Activated CD4-positive, alpha-beta memory T cell treated with anti-CD3 and anti-CD28 coated beads, Interleukin-2, amount 10 ng/mL, durations not matched to agents 7 days and 5 days (primary cell): ENCODE measurements at regions of chr1 and their contacts with region 1.

Region 1: GRCh38 chr1:94039514-94039870 is 81.5 kb downstream of the ABCA4 start:
- DNase-seq: peak; percentile 64
- H3K4me3 Mint-ChIP-seq: no peak overlapping the region
- H3K27ac Mint-ChIP-seq: no peak overlapping the region
- H3K4me1 Mint-ChIP-seq: peaks cover 15% of the 10 kb centered on the region
- H3K27me3 Mint-ChIP-seq: peaks cover 41% of the 10 kb centered on the region

Region 2: DNA sequence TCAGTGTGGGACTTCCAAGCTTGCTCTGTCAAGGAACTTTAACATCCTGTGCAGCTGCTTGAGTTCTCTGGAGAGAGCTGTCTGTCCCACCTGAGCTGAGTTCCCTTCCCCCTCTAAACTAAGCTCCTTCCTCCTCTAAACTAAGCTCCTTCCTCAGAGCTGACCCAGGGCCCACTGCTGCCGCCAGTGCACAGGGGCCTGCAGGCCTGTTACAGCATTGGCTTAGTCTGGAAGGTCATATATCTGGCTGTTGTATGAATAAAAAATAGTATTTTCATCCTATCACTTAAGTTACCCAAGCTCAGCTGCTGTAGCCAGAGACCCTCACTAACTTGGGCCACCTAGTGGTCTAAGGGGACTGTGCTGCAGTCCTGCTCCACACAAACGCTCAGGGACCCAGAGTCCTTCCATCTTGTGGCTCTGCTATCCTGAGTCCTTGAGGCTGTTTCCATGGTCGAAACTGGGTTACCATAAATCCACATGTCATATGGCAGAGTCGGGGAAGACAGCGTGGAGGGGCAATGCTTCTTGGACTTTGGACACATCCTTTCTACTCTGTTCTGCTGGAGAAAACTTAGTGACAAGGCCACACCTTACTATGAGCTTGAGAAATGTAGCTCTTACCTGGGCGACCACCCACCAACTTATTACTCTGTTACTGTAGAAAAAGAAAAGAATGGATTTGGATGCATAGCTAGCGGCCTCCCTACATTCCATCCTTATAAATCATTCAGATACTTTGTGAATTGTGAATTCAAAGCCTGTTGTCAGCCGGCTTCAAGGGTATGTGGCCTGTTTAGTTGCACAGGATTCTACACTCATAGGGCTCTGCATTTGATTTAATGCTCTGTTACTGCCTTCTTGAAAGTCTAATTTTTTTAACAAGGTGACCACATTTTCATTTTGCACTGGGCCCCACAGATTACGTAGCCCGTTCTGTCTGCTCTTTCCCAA is 58.9 kb before region 1 on chr1:
- CTCF ChIA-PET with region 1: interaction called, 10 read pairs
- POLR2A ChIA-PET with region 1: no interaction called
- DNase-seq: no peak
- H3K4me3 Mint-ChIP-seq: no peak overlapping the region
- H3K27ac Mint-ChIP-seq: no peak overlapping the region
- H3K4me1 Mint-ChIP-seq: no peaks in the 10 kb centered on the region
- H3K27me3 Mint-ChIP-seq: peaks cover 8% of the 10 kb centered on the region

Region 3: DNA sequence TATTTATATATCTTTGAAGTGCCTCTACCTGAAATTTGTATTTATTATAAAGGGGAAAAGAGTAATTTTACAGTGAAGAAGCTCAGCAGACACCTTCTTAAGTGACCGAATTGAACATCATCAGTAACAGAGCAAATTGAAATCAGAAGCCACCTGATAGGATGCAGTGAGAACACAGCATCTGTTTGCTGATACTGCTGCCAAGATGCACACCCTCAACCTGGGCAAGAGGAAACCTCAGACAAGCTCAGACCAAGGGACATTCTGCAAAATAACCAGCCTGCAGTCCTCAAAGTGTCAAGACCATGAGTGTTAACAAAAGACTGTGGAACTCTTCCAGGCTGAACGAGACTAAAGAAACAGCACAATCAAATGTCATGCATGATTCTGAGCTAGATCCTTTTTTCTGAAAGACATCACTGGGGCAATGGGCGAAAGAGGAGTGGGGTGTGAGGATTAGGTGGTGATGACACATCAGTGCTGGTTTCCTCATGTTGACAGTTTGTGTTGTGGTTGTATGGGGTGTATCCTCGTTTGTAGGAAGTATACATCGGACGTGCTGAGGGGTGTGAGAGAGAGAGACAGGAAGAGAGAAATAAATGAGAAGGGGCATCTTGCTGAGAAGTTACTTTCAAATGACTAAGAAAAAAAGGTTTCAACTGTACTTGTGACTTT is 22.2 kb before region 1 on chr1:
- CTCF ChIA-PET with region 1: interaction called, 95 read pairs
- POLR2A ChIA-PET with region 1: interaction called, 3 read pairs
- DNase-seq: peak; percentile 73
- H3K4me3 Mint-ChIP-seq: peak overlapping the region; percentile 4
- H3K27ac Mint-ChIP-seq: peak overlapping the region; percentile 86
- H3K4me1 Mint-ChIP-seq: peaks cover 44% of the 10 kb centered on the region
- H3K27me3 Mint-ChIP-seq: peaks cover 15% of the 10 kb centered on the region

Region 4: DNA sequence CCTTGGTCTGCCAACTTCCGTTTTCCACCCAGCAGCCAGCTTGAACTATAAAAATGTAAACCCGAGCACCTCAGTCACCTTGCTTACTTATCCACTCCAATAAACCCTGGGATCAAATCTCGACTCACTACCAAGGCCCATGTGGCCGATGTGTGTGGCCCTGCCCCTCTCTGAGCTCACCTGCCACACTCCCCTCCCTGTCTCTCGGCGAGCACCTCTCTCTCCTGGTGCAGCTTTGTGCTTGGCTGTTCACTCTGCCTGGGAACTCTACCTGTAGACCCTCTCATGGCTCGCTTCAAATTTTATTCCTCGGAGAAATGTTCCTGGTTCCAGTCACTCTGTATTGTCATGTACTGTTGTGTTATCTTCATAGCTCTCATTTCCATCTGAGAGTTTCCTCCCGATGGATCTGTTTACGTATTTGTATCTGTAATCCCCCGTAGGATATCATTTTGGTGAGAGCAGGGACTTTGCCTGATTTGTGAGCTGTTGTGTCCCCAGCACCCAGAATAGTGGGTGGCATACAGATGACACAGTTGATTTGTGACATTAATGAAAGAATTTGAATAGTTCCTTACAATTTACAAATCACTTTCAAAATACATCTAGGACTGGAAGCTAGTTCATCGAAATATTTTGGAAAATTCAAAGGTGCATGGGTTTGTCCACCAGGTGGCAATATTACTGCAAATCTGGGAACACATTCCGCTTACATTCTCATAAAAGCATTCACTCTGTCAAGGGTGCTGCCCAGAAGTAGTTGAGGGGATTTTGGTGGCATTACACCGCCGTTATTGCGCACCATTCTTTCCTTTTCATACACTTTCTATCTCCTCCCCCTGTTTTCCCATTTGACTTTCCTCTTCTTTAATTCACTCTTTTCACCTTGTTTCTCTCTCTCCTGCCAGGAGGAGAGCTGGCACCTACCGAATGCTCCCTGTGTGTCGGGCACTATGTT is 13.8 kb before region 1 on chr1:
- CTCF ChIA-PET with region 1: interaction called, 95 read pairs
- POLR2A ChIA-PET with region 1: interaction called, 3 read pairs
- DNase-seq: no peak
- H3K4me3 Mint-ChIP-seq: no peak overlapping the region
- H3K27ac Mint-ChIP-seq: no peak overlapping the region
- H3K4me1 Mint-ChIP-seq: peaks cover 15% of the 10 kb centered on the region
- H3K27me3 Mint-ChIP-seq: peaks cover 30% of the 10 kb centered on the region

Region 5: DNA sequence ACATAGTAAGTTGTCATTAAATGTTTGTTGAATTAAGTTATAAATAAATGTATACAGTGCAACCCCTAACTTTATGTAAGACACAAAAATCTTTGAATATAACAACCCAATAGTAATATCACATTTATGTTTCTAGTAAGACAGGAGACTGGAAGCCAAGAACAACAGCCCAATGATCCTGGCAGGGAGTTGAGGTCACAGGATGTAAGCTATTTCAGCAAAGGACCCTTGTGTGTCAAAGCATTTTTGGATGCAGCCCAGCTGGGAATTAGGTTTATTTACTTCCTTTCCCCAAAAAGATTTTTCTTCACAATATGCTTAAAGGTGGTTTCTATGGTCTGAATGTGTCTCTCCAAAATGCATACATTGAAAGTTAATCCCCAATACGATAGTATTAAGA is 115.5 kb after region 1 on chr1:
- CTCF ChIA-PET with region 1: no interaction called
- POLR2A ChIA-PET with region 1: no interaction called
- DNase-seq: no peak
- H3K4me3 Mint-ChIP-seq: no peak overlapping the region
- H3K27ac Mint-ChIP-seq: no peak overlapping the region
- H3K4me1 Mint-ChIP-seq: no peaks in the 10 kb centered on the region
- H3K27me3 Mint-ChIP-seq: peaks cover 7% of the 10 kb centered on the region

Region 6: GRCh38 chr1:94335950-94336349 is 296.5 kb after region 1 on chr1:
- CTCF ChIA-PET with region 1: interaction called, 12 read pairs
- POLR2A ChIA-PET with region 1: no interaction called
- DNase-seq: no peak
- H3K4me3 Mint-ChIP-seq: no peak overlapping the region
- H3K27ac Mint-ChIP-seq: no peak overlapping the region
- H3K4me1 Mint-ChIP-seq: no peaks in the 10 kb centered on the region
- H3K27me3 Mint-ChIP-seq: peaks cover 12% of the 10 kb centered on the region